Posterior cingulate gyrus (tissue), 11 donors: ENCODE measurements at regions of chr11 and their contacts with region 1.

Region 1: GRCh38 chr11:67288452-67289225 is 464 bp upstream of the ANKRD13D start:
- DNase-seq: peak; percentile 68 to 97 (median 82)

Region 2: GRCh38 chr11:67303132-67303834 is 14.6 kb after region 1 on chr11 and contains the start of gene SSH3:
- intact Hi-C with region 1: loop called (anchors 2 kb)
- DNase-seq: peak; percentile 44 to 96 (median 75)